ENCODE measurements at regions of chr18 and their contacts with region 1.

Region 1: GRCh38 chr18:23131693-23132319 is 3.5 kb upstream of the CABLES1 start:
- DNase-seq: peak; percentile 35
- H3K4me3 Mint-ChIP-seq: no peak overlapping the region
- H3K27ac Mint-ChIP-seq: no peak overlapping the region
- H3K4me1 Mint-ChIP-seq: peaks cover 20% of the 10 kb centered on the region
- H3K27me3 Mint-ChIP-seq: peaks cover 22% of the 10 kb centered on the region

Region 2: DNA sequence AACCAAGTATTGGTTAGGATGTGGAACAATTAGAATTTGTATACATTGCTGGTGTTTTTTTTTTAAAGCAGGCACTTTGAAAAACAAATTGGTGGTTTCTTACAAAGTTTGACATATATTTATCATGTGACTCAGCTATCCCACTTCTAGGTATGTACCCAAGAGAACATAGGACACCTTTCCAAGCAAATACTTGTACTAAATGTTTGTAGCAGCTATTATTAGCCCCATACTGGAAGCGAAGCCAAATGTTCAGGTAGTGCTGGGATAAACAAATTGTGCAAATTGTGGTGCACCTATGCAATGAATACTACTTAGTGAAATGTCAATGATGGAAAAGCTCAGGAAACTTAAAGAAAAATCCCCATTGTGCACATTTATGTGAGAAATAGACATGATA is 1290.2 kb before region 1 on chr18:
- intact Hi-C with region 1: no loop called
- DNase-seq: no peak
- H3K4me3 Mint-ChIP-seq: no peak overlapping the region
- H3K27ac Mint-ChIP-seq: no peak overlapping the region
- H3K4me1 Mint-ChIP-seq: no peaks in the 10 kb centered on the region
- H3K27me3 Mint-ChIP-seq: no peaks in the 10 kb centered on the region

Region 3: GRCh38 chr18:22632191-22632590 is 499.6 kb before region 1 on chr18:
- intact Hi-C with region 1: no loop called
- DNase-seq: no peak
- H3K4me3 Mint-ChIP-seq: no peak overlapping the region
- H3K27ac Mint-ChIP-seq: no peak overlapping the region
- H3K4me1 Mint-ChIP-seq: no peaks in the 10 kb centered on the region
- H3K27me3 Mint-ChIP-seq: no peaks in the 10 kb centered on the region

Region 4: DNA sequence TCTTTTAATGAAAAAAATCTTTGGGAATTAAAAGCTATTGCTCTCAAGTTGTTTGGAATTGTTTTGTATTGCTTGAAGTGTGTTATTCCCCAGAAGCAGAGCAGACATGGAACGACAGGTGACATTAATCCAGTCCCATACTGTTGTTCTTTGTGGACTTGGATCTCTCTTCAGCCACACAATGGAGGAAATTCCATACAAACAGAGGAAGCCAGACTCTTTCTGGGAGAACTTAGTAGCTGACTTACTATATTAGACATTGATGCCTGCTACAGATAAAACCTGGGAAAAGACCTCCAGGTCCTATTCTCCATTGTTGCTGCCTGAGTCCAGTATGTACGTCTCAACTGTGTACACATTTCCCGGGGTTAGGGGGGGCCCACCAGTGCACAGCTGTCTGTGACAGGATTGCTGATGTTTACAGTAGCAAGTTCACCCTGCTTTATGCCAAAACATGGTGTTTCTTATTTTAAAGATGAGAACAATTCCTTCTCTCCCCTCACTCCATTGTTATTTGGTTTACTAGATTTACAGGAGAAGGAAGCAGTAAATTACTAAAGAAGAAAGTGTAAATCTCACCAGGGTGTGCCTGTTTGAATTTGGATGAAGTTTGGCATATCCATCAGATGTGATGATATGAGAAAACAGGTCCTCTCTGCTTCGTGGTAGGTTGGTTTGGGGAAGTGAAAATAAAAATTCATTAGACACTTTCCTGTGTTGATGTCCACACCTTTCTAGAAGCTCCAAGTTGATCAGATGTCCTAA is 341.1 kb before region 1 on chr18:
- intact Hi-C with region 1: loop called (anchors 10 kb)
- DNase-seq: no peak
- H3K4me3 Mint-ChIP-seq: no peak overlapping the region
- H3K27ac Mint-ChIP-seq: no peak overlapping the region
- H3K4me1 Mint-ChIP-seq: no peaks in the 10 kb centered on the region
- H3K27me3 Mint-ChIP-seq: peaks cover 18% of the 10 kb centered on the region

Region 5: DNA sequence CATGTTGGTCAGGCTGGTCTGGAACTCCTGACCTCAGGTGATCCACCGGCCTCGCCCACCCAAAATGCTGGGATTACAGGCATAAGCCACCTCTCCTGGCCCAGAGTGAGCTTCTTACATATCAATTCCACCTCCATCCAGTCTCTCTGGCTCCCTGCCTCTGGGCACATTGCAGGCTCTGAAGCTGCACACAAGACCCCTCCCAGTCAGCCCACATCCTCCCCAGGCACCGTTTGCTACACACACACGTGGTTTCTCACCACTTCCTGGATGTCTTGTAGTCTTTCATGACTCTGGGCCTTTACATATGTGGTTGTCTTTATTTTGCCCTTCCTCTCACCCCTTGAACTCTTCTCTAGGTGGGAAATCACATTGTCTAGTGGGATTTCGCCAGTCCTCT is 60.5 kb before region 1 on chr18:
- intact Hi-C with region 1: loop called (anchors 5 kb)
- DNase-seq: peak; percentile 86
- H3K4me3 Mint-ChIP-seq: peak overlapping the region; percentile 63
- H3K27ac Mint-ChIP-seq: peak overlapping the region; percentile 97
- H3K4me1 Mint-ChIP-seq: peaks cover 60% of the 10 kb centered on the region
- H3K27me3 Mint-ChIP-seq: peaks cover 2% of the 10 kb centered on the region

Region 6: DNA sequence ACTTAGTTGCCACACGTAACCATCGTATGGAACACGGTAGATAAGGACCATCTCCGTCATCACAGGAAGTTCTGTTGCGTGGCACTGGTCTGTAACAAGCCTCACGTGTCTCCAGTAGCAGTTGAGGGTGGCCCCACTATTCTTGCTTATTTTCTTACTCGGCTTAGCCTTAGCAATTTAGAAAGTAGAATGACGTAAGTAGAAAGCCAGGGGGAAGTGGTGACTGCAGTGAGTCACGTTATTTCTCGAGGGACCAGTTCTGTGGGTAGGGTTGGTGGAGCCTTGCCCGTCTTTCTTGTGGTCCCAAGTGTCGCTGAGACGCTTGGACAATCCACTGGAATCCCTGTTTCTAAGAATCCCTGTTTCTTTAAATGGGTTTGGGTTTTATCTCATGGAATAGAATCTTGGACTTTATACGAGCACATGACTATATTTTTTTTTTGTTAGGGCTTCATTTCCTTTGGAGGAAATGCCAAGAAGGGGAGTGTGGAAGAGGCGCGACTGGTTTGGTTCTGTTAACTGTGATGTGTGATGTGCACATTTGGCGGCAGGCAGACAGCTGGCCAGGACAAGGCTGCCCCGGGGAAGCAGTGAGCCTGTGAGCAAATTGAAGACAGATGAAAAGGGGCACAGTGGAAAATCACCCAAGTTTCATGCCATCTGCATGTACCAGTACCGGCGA is 99.7 kb after region 1 on chr18:
- intact Hi-C with region 1: loop called (anchors 2 kb)
- DNase-seq: peak; percentile 80
- H3K4me3 Mint-ChIP-seq: peak overlapping the region; percentile 72
- H3K27ac Mint-ChIP-seq: peak overlapping the region; percentile 89
- H3K4me1 Mint-ChIP-seq: peaks cover 64% of the 10 kb centered on the region
- H3K27me3 Mint-ChIP-seq: peaks cover 8% of the 10 kb centered on the region

Region 7: DNA sequence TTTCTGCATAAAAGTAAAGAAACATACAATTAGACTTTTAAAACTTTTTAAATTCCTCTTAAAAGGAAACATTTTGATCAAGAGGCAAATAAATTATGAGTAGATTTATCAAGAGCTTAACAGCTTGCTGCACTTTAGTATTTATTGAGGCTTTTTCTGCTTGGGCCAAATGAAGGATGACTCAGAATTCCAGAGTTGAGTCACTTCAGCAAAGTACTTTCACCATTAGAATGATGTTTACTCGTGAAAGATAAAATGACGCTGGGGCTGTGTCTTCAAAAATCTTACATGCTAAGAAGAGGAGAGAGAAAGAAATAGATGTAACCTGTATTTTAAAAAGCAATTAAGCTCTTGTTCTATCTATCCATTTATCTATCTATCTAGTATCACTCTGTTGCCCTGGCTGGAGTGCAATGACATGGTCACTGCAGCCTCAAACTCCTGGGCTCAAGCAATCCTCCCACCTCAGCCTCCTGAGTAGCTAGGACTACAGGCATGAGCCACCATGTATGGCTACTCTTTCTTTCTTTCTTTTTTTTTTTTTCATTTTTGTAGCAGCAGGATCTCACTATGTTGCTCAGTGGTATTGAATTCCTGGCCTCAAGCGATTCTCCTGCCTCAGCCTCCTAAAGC is 246.0 kb after region 1 on chr18:
- intact Hi-C with region 1: loop called (anchors 1 kb)
- DNase-seq: no peak
- H3K4me3 Mint-ChIP-seq: no peak overlapping the region
- H3K27ac Mint-ChIP-seq: peak overlapping the region; percentile 72
- H3K4me1 Mint-ChIP-seq: peaks cover 11% of the 10 kb centered on the region
- H3K27me3 Mint-ChIP-seq: peaks cover 7% of the 10 kb centered on the region

Region 8: GRCh38 chr18:23406271-23406787 is 274.5 kb after region 1 on chr18:
- intact Hi-C with region 1: loop called (anchors 1 kb)
- DNase-seq: no peak
- H3K4me3 Mint-ChIP-seq: no peak overlapping the region
- H3K27ac Mint-ChIP-seq: no peak overlapping the region
- H3K4me1 Mint-ChIP-seq: no peaks in the 10 kb centered on the region
- H3K27me3 Mint-ChIP-seq: peaks cover 2% of the 10 kb centered on the region

Measured in activated T-helper 1 cell treated with anti-CD3 and anti-CD28 coated beads, Interleukin-12 subunit alpha, Interleukin-12 subunit beta, Interleukin-2, Interleukin-4 antibody, amounts not matched to agents 30 ng/mL and 10 ng/mL and 1 ng/mL, durations not matched to agents 14 hours and 24 hours and 36 hours (primary cell).